Motor neuron (in vitro differentiated cells): ENCODE measurements at regions of chr3 and their contacts with region 1.

Region 1: GRCh38 chr3:132730891-132731580 is 8.8 kb upstream of the NPHP3 start:
- ATAC-seq: peak; percentile 60 to 96 (median 82)
- H3K4me3 ChIP-seq: no peak overlapping the region
- H3K27ac ChIP-seq: no peak overlapping the region
- H3K4me1 ChIP-seq: no peaks in the 10 kb centered on the region

Region 2: GRCh38 chr3:132432639-132433038 is 298.4 kb before region 1 on chr3:
- in situ Hi-C with region 1: no loop called
- ATAC-seq: peak in 6 of 8 experiments; percentile 53 to 100 (median 77)
- H3K4me3 ChIP-seq: no peak overlapping the region
- H3K27ac ChIP-seq: no peak overlapping the region
- H3K4me1 ChIP-seq: no peaks in the 10 kb centered on the region

Region 3: DNA sequence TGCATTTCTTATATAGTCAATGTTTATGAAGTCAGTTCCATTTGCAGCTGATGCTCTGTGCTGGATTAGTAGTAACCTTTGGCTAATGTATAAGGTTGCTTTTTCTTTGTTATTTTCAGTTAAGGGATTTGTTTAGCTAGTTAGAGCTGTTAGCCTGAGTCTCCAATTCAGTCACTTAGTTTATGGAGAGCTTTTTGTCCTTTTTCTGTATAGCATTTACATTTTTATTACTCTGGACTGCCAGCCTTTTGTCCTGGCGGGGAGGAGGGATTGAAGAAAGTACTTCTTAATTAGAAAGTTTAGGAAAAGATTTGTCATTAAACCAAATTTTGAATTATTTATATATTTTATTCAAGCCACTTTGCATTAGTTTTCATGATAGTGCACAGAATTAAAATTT is 261.7 kb before region 1 on chr3:
- in situ Hi-C with region 1: no loop called
- ATAC-seq: no peak
- H3K4me3 ChIP-seq: no peak overlapping the region
- H3K27ac ChIP-seq: no peak overlapping the region
- H3K4me1 ChIP-seq: no peaks in the 10 kb centered on the region

Region 4: DNA sequence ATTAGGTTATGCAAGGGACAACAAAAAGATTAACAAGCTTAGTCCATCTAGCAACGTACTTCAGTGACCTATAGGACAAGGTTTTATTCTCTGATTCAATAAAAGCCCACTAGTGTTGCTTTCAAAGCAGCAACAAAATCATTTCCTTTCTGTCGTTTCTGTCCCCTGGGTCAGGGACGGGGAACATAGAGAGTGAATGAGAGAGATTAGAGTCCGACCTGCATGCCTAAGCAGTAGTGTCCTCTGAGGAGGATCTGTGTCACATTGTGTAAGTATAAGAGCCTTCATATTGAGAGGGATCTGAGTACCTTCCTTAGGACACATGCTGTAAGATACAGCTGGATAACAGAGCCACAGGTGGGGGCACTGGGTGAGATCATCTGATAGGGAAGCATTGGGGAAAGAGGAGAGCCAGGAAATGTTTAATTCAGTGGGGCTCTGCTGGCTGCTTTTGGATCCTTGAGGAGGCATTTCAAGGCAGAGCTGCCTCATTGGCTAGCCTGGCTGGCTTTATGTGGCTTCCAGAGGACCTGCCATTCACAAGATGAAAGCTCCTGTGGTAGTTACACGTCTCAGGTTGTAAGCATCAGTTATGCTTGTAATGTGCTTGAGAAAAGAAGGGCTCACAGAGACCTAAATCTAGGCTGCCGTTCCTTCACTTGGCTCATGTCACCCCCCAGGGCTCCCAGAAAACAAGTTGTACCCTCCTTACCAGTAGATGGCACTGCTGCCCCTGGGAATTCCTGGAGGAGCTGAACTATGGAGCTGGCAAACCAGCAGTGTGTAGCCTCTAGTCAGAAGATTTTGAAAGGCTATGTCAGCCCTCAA is 309.9 kb after region 1 on chr3:
- in situ Hi-C with region 1: loop called in 3 of 9 experiments (anchors 25 kb)
- ATAC-seq: peak; percentile 43 to 92 (median 56)
- H3K4me3 ChIP-seq: peak overlapping the region in 1 of 5 donors; percentile 2
- H3K27ac ChIP-seq: no peak overlapping the region
- H3K4me1 ChIP-seq: peaks cover 3 to 15% of the 10 kb centered on the region in 2 donors

Region 5: DNA sequence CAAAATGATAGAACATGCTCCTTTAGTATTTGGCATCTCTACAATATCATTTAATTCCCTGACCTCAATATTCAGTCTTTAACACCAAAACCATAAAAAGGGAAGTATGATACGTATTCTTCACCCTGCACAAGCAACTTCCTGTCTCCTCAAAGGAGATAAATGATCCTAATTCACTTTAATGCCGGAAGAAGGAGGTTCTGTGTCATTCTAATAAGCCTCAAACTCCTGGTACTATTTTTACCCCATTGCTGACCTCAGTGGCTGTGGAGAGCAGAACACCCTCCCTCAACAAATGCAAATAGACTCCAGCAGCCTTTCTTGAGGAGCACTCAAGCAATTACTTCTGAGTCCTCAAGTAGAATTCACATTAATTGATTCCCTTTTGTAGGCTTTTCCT is 480.4 kb after region 1 on chr3:
- in situ Hi-C with region 1: loop called in 1 of 9 experiments (anchors 25 kb)
- ATAC-seq: peak in 7 of 8 experiments; percentile 24 to 99 (median 98)
- H3K4me3 ChIP-seq: no peak overlapping the region
- H3K27ac ChIP-seq: no peak overlapping the region
- H3K4me1 ChIP-seq: peaks cover 10 to 27% of the 10 kb centered on the region in 2 donors

Region 6: DNA sequence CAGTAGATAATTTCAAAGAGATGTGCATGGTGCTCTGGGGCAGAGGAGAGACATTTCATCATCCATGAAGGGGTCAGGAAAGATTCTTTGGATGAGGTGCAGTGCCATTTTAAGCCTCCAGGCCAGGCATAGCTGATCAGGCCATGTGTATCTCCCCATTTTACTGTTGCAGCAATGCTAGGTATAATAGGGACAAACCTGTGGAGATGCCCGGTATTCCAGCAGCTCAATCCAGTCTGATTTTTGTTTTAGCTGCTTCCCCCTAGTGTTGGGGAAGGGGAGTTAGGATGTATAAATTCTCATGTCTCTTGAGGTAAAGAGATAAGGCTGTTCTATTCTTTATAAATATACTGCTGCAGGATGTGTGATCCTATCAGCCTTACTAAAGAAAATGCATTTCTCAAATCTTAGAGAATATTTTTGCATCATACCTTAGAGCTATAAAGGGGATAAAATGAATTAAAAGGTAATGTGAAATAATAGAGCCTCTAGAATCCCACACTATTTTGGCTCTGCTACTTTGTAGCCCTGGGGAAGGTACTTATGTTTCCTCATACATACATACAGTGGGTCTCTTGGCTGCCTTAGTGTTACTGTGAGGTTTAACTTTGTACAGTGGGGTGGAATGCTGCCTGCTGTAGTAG is 847.6 kb after region 1 on chr3:
- in situ Hi-C with region 1: loop called in 2 of 9 experiments (anchors 10 to 25 kb)
- ATAC-seq: peak in 1 of 8 experiments; percentile 11
- H3K4me3 ChIP-seq: no peak overlapping the region
- H3K27ac ChIP-seq: no peak overlapping the region
- H3K4me1 ChIP-seq: peaks cover 3 to 10% of the 10 kb centered on the region in 2 donors